ENCODE measurements at regions of chr9 and their contacts with region 1.

Region 1: DNA sequence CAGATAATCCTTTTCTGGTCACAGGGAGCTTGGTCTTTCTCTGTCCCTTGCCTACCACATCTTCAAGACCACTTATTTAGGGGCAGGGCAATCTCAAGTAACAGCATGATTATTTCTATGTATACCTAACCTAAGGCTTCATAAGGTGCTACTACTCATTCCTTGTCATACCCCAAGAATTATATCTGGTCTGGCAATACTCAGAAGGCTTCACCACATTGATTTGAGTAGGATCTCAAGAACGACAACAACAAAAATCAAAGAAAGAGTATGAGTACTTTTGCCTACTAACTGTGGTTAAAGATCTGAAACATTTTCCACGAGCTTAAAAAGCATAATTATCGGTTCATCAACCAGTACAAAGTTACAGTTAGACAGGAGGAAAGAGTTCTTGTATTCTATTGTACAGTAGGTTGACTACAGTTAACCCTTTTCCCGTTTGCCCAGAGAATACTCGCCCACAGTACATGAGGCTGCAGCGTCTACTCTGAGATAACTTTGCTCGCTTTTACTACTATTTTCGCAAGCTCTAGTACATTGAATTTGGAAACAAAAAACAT is 41.0 kb downstream of the FANCC start:
- DNase-seq: no peak
- H3K4me3 ChIP-seq: no peak overlapping the region
- H3K27ac ChIP-seq: no peak overlapping the region
- H3K27me3 ChIP-seq: no peaks in the 10 kb centered on the region
- CTCF ChIP-seq: no peak

Region 2: DNA sequence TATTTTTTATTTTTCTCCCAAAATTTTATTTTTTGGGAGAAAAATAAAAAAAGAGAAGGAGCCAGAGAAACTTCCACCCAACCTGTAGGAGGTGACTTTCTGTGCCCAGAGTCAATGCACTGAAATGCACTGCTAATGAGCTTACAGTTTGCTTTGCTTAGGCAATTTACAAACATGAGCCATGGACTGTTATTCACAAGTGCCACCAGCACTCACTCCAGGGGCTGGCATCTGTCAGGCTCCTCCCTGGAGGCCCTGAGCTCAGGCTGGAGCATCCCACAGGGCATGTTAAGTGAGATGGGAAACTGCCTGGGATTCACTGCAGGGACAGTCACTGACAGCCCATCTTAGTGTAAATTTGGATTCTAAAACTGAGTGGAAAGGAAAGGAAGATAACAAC is 33.9 kb before region 1 on chr9:
- CTCF ChIA-PET with region 1: no interaction called
- POLR2A ChIA-PET with region 1: no interaction called
- DNase-seq: no peak
- H3K4me3 ChIP-seq: no peak overlapping the region
- H3K27ac ChIP-seq: no peak overlapping the region
- H3K27me3 ChIP-seq: no peaks in the 10 kb centered on the region
- CTCF ChIP-seq: no peak

Region 3: GRCh38 chr9:95264954-95265615 is 11.4 kb before region 1 on chr9:
- CTCF ChIA-PET with region 1: interaction called, 12 read pairs
- POLR2A ChIA-PET with region 1: no interaction called
- DNase-seq: peak; percentile 45
- H3K4me3 ChIP-seq: no peak overlapping the region
- H3K27ac ChIP-seq: no peak overlapping the region
- H3K27me3 ChIP-seq: no peaks in the 10 kb centered on the region
- CTCF ChIP-seq: peak; percentile 68

Region 4: DNA sequence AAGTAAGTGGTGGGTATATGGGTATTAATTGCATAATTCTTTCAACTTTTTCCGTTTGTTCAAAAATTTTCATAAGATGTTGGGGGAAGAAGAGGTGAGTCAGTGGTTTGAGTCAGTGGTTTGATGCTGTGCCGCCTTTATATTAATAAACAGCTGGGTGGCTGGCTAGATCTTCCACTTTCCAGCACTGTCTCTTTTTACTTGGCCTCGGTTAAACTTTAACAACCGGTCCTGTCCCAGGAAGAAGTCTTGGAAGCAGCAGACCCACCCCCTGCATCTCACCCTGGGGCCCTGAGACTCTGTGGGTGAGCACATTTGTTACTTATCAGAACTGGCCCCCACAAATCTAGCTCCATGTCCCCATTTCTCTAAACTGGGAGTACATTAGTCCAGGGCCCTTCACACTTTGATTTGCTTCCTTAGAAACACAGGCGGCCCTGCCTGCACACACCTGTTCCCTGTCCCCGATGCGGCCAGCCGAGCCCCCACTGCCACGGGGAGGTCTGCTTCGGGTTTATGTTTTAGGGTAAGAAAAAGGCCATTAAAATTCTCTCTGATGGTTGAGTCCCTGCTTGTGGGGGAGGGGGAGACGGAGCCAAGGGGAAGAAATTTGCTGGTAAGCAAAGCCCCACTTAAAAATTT is 149.6 kb after region 1 on chr9:
- CTCF ChIA-PET with region 1: no interaction called
- POLR2A ChIA-PET with region 1: no interaction called
- DNase-seq: no peak
- H3K4me3 ChIP-seq: peak overlapping the region; percentile 54
- H3K27ac ChIP-seq: peak overlapping the region; percentile 80
- H3K27me3 ChIP-seq: no peaks in the 10 kb centered on the region
- CTCF ChIP-seq: no peak

Measured in AG04450 (cell line).